ENCODE measurements at regions of chr20 and their contacts with region 1.

Region 1: DNA sequence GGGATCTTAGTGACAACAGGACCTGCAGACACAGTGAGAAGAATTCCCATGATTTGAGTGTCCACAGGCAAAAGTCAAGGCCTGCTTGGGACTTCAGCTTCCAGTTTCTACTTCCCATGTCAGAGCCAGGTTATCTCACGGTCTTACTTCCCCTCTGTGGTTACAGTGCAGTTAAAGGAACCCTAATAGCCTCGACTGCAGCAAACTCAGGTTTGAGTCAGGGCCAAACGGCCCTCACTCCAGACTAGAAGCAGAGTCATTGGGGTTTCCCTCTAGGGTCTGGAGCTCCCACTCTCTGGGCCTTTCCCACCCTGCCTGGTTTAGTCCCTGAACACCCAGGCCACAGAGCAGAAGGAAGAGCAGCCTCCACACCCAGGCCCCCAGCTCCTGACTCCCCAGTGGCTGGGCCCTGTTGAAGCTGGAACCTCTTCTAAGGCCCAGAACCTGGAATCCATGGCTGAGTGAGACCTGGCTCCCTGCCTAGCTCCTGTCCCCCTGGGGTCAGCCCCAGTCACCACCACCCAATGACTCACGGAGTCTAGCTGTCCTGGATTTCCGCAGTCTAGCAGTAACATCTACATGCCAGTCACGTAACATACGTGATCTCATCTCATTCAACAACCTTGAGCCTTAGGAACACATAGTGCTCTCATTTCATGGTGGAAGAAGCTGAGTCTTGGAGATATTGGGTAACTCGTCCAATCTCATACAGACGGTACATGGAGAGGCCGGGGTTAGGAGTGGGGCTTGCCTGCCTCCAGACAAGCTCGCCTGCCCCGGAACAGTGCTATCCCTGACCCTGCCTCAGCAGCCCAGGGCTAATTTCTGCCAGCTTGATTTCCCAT is 9.2 kb upstream of the GHRH start:
- DNase-seq: no peak
- H3K4me3 ChIP-seq: no peak overlapping the region
- H3K27ac ChIP-seq: no peak overlapping the region
- H3K4me1 ChIP-seq: no peaks in the 10 kb centered on the region
- H3K27me3 ChIP-seq: no peaks in the 10 kb centered on the region
- CTCF ChIP-seq: no peak
- POLR2A ChIP-seq: no peak

Region 2: GRCh38 chr20:37282556-37282955 is 11.8 kb after region 1 on chr20:
- CTCF ChIA-PET with region 1: interaction called, 16 read pairs
- POLR2A ChIA-PET with region 1: interaction called, 3 read pairs
- dilution Hi-C with region 1: no loop called
- intact Hi-C with region 1: no loop called
- DNase-seq: no peak
- H3K4me3 ChIP-seq: no peak overlapping the region
- H3K27ac ChIP-seq: no peak overlapping the region
- H3K4me1 ChIP-seq: no peaks in the 10 kb centered on the region
- H3K27me3 ChIP-seq: peaks cover 0 to 10% of the 10 kb centered on the region in 2 experiments
- CTCF ChIP-seq: no peak
- POLR2A ChIP-seq: no peak

Region 3: DNA sequence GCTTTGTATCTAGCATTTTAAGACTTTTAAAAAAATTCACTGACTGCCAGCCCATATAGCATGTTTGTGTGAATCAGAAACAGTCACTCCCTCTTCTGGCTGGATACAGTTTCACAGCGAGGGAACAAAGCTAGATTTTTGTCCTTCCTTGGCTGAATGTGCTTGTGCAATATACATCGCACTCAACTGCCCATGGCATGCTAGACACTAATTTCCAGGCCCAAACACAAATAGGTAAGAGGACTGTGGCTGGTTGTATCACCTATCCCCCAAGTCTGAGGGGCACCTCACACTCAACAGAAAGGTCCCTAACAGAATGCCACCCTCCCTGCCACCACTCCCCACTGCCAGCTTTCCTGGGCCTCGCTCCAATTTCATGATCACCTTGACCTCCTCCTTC is 273.0 kb after region 1 on chr20:
- CTCF ChIA-PET with region 1: interaction called, 17 read pairs
- POLR2A ChIA-PET with region 1: no interaction called
- dilution Hi-C with region 1: no loop called
- intact Hi-C with region 1: no loop called
- DNase-seq: peak; percentile 55
- H3K4me3 ChIP-seq: no peak overlapping the region
- H3K27ac ChIP-seq: no peak overlapping the region
- H3K4me1 ChIP-seq: peaks cover 11% of the 10 kb centered on the region
- H3K27me3 ChIP-seq: peaks cover 3 to 7% of the 10 kb centered on the region in 2 experiments
- CTCF ChIP-seq: peak; percentile 14 to 43
- POLR2A ChIP-seq: no peak

Region 4: GRCh38 chr20:38260378-38261053 is 989.7 kb after region 1 on chr20 and contains the start of gene KIAA1755:
- CTCF ChIA-PET with region 1: no interaction called
- POLR2A ChIA-PET with region 1: no interaction called
- dilution Hi-C with region 1: no loop called
- intact Hi-C with region 1: no loop called
- DNase-seq: no peak
- H3K4me3 ChIP-seq: peak within 1 kb of the TSS in 2 of 3 experiments; percentile 27 to 30
- H3K27ac ChIP-seq: no peak within 1 kb of the TSS
- H3K4me1 ChIP-seq: no peaks in the 10 kb centered on the region
- H3K27me3 ChIP-seq: no peaks in the 10 kb centered on the region
- CTCF ChIP-seq: no peak
- POLR2A ChIP-seq: no peak
- total RNA-seq, gene KIAA1755: 0.51 and 0.58 TPM in 2 replicates

Region 5: GRCh38 chr20:38941726-38942389 is 1671.1 kb after region 1 on chr20:
- CTCF ChIA-PET with region 1: no interaction called
- POLR2A ChIA-PET with region 1: no interaction called
- dilution Hi-C with region 1: no loop called
- intact Hi-C with region 1: no loop called
- DNase-seq: no peak
- H3K4me3 ChIP-seq: no peak overlapping the region
- H3K27ac ChIP-seq: no peak overlapping the region
- H3K4me1 ChIP-seq: peaks cover 7% of the 10 kb centered on the region
- H3K27me3 ChIP-seq: no peaks in the 10 kb centered on the region
- CTCF ChIP-seq: no peak
- POLR2A ChIP-seq: no peak

Measured in endothelial cell of umbilical vein (primary cell).